ENCODE measurements at regions of chr16 and their contacts with region 1.

Region 1: GRCh38 chr16:13742928-13743327 is 177.0 kb upstream of the ERCC4 start:
- DNase-seq: no peak
- ATAC-seq: no peak
- H3K4me3 ChIP-seq: no peak overlapping the region
- H3K27ac ChIP-seq: no peak overlapping the region
- H3K4me1 ChIP-seq: no peaks in the 10 kb centered on the region
- H3K27me3 ChIP-seq: no peaks in the 10 kb centered on the region
- CTCF ChIP-seq: no peak

Region 2: DNA sequence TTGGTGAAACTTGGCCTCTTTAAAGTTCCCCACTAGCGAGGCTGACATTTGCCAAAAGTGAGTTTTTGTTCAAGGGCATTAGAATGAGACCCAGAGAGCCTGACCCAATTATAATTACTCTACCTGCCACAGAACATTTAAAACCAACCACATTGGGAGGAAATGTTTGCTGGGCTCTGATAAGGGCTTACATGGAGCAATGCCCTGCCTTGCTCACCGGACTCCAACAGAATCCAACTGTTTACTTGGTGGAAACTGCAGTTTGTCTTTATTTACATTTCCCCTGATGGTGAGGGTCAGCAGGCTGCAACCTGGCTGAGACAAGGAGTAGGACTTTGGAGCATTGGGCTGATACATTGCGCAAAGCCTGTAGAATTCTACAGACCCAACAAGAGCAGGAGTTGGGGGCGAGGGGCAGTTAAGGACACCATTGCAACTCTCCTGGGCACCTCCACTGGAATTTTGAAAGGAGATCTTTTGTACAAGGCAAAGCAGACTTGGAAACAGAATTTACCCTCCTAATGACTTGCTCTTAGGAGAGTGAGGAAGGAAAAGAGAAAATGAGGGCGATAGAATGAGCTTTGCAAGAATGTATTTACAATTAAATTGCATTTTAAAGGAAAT is 472.9 kb before region 1 on chr16:
- CTCF ChIA-PET with region 1: no interaction called
- POLR2A ChIA-PET with region 1: interaction called, 12 read pairs
- in situ Hi-C with region 1: no loop called
- intact Hi-C with region 1: no loop called
- DNase-seq: no peak
- ATAC-seq: no peak
- H3K4me3 ChIP-seq: no peak overlapping the region
- H3K27ac ChIP-seq: no peak overlapping the region
- H3K4me1 ChIP-seq: no peaks in the 10 kb centered on the region
- H3K27me3 ChIP-seq: no peaks in the 10 kb centered on the region
- CTCF ChIP-seq: no peak

Region 3: GRCh38 chr16:13756411-13757140 is 13.6 kb after region 1 on chr16:
- CTCF ChIA-PET with region 1: no interaction called
- POLR2A ChIA-PET with region 1: no interaction called
- in situ Hi-C with region 1: no loop called
- intact Hi-C with region 1: no loop called
- DNase-seq: no peak
- ATAC-seq: no peak
- H3K4me3 ChIP-seq: no peak overlapping the region
- H3K27ac ChIP-seq: no peak overlapping the region
- H3K4me1 ChIP-seq: no peaks in the 10 kb centered on the region
- H3K27me3 ChIP-seq: peaks cover 17% of the 10 kb centered on the region
- CTCF ChIP-seq: no peak

Region 4: GRCh38 chr16:14003074-14003570 is 260.2 kb after region 1 on chr16:
- CTCF ChIA-PET with region 1: no interaction called
- POLR2A ChIA-PET with region 1: no interaction called
- in situ Hi-C with region 1: no loop called
- intact Hi-C with region 1: no loop called
- DNase-seq: no peak
- ATAC-seq: peak; percentile 83
- H3K4me3 ChIP-seq: peak overlapping the region in 1 of 2 experiments; percentile 21; a peak in 1 of 4 replicates
- H3K27ac ChIP-seq: peak overlapping the region; percentile 8; the same call in 1 of the 2 replicates
- H3K4me1 ChIP-seq: peaks cover 20% of the 10 kb centered on the region
- H3K27me3 ChIP-seq: no peaks in the 10 kb centered on the region
- CTCF ChIP-seq: no peak

Measured in Panc1 (cell line).